GM12878 (cell line): ENCODE measurements at regions of chr5 and their contacts with region 1.

Region 1: DNA sequence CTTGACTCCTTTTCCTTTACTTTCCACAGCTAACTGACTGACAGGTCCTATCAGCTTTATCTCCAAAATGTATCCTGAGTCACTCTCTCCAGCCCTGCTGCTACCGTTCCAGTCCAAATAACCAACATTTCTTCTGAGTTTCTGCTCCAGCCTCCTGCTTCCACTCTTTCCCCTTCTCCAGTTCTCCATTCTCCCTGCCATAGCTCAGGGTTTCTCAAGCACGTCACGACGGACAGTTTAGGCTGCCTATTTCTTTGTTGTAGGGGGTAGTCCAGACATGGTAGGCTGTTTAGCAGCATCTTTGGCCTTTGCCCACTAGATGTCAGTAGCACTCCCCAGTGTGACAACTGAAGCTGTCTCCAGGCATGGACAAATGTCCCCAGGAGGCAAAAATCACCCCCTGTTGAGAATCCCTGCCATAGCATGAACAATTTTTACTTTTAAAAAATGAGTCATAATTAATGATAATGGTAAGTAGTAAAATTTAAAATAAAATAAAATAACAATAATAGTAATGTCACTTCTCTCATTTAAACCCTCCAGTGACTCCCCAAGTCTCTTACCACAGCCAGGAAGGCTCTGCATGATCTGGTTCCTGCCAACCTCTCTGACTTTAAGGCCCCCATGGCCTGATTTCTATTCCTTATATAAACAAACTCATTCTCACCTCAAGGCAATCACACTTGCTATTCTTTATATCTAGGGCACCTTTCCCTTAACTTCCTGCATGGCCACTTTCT is 105.4 kb upstream of the FER start:
- DNase-seq: peak; percentile 68
- ATAC-seq: peak; percentile 100
- H3K4me3 ChIP-seq: no peak overlapping the region
- H3K27ac ChIP-seq: no peak overlapping the region
- H3K4me1 ChIP-seq: no peaks in the 10 kb centered on the region
- H3K27me3 ChIP-seq: no peaks in the 10 kb centered on the region
- CTCF ChIP-seq: peak; percentile 94 to 96 (median 94); a peak in 5 of 6 replicates
- EP300 ChIP-seq: no peak
- POLR2A ChIP-seq: no peak
- RAD21 ChIP-seq: peak; percentile 98

Region 2: DNA sequence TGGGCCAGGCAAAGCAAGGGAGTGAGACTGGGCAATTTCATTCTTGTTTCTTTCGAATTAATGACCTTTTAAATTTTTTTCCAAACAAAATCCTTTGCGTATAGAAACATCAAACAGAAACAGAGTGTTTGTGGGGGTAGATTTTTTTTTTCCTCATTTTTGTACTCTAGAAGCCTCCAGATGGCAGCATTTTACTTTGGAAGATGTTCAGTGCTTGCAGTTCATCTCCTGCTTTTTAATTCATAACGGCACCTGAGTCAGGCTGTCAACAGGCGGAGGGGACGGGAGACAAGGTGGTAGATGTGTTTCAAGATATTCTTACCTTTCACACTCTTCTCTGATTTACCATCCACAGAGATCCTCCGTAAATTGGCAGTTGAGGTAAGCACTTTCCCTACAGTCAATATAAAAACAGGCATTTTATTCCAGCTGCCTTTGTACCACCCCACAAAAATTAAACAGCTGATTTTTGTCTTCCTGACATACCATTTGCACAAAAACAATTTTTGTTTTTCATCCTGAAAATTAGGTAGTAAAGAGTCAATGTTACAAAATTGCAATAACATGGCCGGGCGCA is 160.9 kb before region 1 on chr5:
- CTCF ChIA-PET with region 1: no interaction called
- POLR2A ChIA-PET with region 1: no interaction called
- RAD21 ChIA-PET with region 1: no interaction called
- SMC1A ChIA-PET with region 1: interaction called, 3 read pairs
- in situ Hi-C with region 1: no loop called
- intact Hi-C with region 1: loop called (anchors 5 kb)
- DNase-seq: peak; percentile 30
- ATAC-seq: peak; percentile 62
- H3K4me3 ChIP-seq: no peak overlapping the region
- H3K27ac ChIP-seq: no peak overlapping the region
- H3K4me1 ChIP-seq: no peaks in the 10 kb centered on the region
- H3K27me3 ChIP-seq: no peaks in the 10 kb centered on the region; a peak in 1 of 4 replicates
- CTCF ChIP-seq: peak in 2 of 3 experiments; percentile 24 to 50; a peak in 4 of 6 replicates
- EP300 ChIP-seq: no peak
- POLR2A ChIP-seq: no peak
- RAD21 ChIP-seq: peak; percentile 84

Region 3: DNA sequence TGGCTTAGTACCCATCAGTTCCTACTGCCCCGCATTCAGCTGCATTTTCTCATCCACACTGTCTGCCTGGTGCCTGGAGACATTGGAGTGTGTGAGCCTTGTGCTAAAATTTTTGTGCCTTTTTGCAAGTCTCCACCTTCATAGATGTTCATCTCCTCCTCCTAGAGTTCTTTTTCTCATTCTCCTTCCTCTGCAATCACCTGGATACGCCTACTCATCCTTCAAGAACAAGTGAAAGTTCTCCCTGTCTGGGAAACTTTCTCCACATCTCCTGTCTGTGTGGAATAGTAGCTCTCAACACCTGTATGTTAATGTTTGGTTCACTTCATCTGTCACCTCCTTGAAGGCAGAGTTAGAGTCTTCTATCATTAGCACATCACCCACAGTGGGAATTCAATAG is 134.7 kb before region 1 on chr5:
- CTCF ChIA-PET with region 1: no interaction called
- POLR2A ChIA-PET with region 1: no interaction called
- RAD21 ChIA-PET with region 1: no interaction called
- SMC1A ChIA-PET with region 1: no interaction called
- in situ Hi-C with region 1: no loop called
- intact Hi-C with region 1: no loop called
- DNase-seq: no peak
- ATAC-seq: no peak
- H3K4me3 ChIP-seq: no peak overlapping the region
- H3K27ac ChIP-seq: no peak overlapping the region
- H3K4me1 ChIP-seq: no peaks in the 10 kb centered on the region
- H3K27me3 ChIP-seq: no peaks in the 10 kb centered on the region; a peak in 1 of 4 replicates
- CTCF ChIP-seq: no peak
- EP300 ChIP-seq: no peak
- POLR2A ChIP-seq: no peak
- RAD21 ChIP-seq: no peak

Region 4: GRCh38 chr5:108588323-108588722 is 54.0 kb before region 1 on chr5:
- CTCF ChIA-PET with region 1: no interaction called
- POLR2A ChIA-PET with region 1: no interaction called
- RAD21 ChIA-PET with region 1: no interaction called
- SMC1A ChIA-PET with region 1: no interaction called
- in situ Hi-C with region 1: no loop called
- intact Hi-C with region 1: no loop called
- DNase-seq: no peak
- ATAC-seq: no peak
- H3K4me3 ChIP-seq: no peak overlapping the region
- H3K27ac ChIP-seq: no peak overlapping the region
- H3K4me1 ChIP-seq: no peaks in the 10 kb centered on the region
- H3K27me3 ChIP-seq: no peaks in the 10 kb centered on the region
- CTCF ChIP-seq: no peak
- EP300 ChIP-seq: no peak
- POLR2A ChIP-seq: no peak
- RAD21 ChIP-seq: no peak

Region 5: DNA sequence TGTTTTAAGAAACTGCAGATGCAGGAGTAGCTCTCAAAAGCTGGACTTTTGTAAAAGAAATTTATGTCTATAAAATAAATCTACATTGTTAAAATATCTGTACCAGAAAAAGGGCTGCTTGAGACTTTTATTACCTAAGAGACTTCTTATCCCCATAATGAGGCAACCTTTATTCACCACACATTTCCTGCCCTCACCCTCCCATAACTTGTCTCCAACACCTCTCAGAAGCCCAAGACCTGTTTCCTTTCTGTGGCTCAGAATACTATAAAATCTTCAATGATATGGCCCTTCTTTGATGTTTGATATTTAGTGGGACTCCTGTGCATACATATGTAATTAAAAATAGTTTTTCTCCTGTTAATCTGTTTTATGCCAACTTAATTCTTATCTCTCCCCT is 36.2 kb before region 1 on chr5:
- CTCF ChIA-PET with region 1: no interaction called
- POLR2A ChIA-PET with region 1: no interaction called
- RAD21 ChIA-PET with region 1: no interaction called
- SMC1A ChIA-PET with region 1: no interaction called
- in situ Hi-C with region 1: no loop called
- intact Hi-C with region 1: no loop called
- DNase-seq: no peak
- ATAC-seq: no peak
- H3K4me3 ChIP-seq: no peak overlapping the region
- H3K27ac ChIP-seq: no peak overlapping the region
- H3K4me1 ChIP-seq: no peaks in the 10 kb centered on the region
- H3K27me3 ChIP-seq: no peaks in the 10 kb centered on the region
- CTCF ChIP-seq: no peak
- EP300 ChIP-seq: no peak
- POLR2A ChIP-seq: no peak
- RAD21 ChIP-seq: no peak

Region 6: GRCh38 chr5:108617467-108618435 is 24.6 kb before region 1 on chr5:
- CTCF ChIA-PET with region 1: interaction called, 12 read pairs
- POLR2A ChIA-PET with region 1: no interaction called
- RAD21 ChIA-PET with region 1: no interaction called
- SMC1A ChIA-PET with region 1: no interaction called
- in situ Hi-C with region 1: no loop called
- intact Hi-C with region 1: no loop called
- DNase-seq: no peak
- ATAC-seq: no peak
- H3K4me3 ChIP-seq: no peak overlapping the region
- H3K27ac ChIP-seq: no peak overlapping the region
- H3K4me1 ChIP-seq: no peaks in the 10 kb centered on the region
- H3K27me3 ChIP-seq: no peaks in the 10 kb centered on the region
- CTCF ChIP-seq: no peak
- EP300 ChIP-seq: no peak
- POLR2A ChIP-seq: no peak
- RAD21 ChIP-seq: no peak

Region 7: GRCh38 chr5:109439590-109439989 is 797.3 kb after region 1 on chr5:
- CTCF ChIA-PET with region 1: interaction called, 4 read pairs
- POLR2A ChIA-PET with region 1: no interaction called
- RAD21 ChIA-PET with region 1: interaction called, 8 read pairs
- SMC1A ChIA-PET with region 1: no interaction called
- in situ Hi-C with region 1: no loop called
- intact Hi-C with region 1: loop called (anchors 2 kb)
- DNase-seq: no peak
- ATAC-seq: peak; percentile 68
- H3K4me3 ChIP-seq: no peak overlapping the region
- H3K27ac ChIP-seq: no peak overlapping the region
- H3K4me1 ChIP-seq: no peaks in the 10 kb centered on the region
- H3K27me3 ChIP-seq: no peaks in the 10 kb centered on the region
- CTCF ChIP-seq: no peak
- EP300 ChIP-seq: no peak
- POLR2A ChIP-seq: no peak
- RAD21 ChIP-seq: no peak

Region 8: GRCh38 chr5:109479260-109479860 is 837.0 kb after region 1 on chr5:
- CTCF ChIA-PET with region 1: interaction called, 6 read pairs
- POLR2A ChIA-PET with region 1: no interaction called
- RAD21 ChIA-PET with region 1: interaction called, 5 read pairs
- SMC1A ChIA-PET with region 1: interaction called, 5 read pairs
- in situ Hi-C with region 1: loop called (anchors 25 kb)
- intact Hi-C with region 1: loop called (anchors 1 kb)
- DNase-seq: no peak
- ATAC-seq: peak; percentile 60; the same call in 2 of the 3 replicates
- H3K4me3 ChIP-seq: no peak overlapping the region
- H3K27ac ChIP-seq: no peak overlapping the region
- H3K4me1 ChIP-seq: no peaks in the 10 kb centered on the region
- H3K27me3 ChIP-seq: 0 out of 4 replicates have a peak, but pooled peaks cover 0 to 4% of the 10 kb centered on the region in 2 experiments
- CTCF ChIP-seq: peak; percentile 29 to 54 (median 34); a peak in 3 of 6 replicates
- EP300 ChIP-seq: no peak
- POLR2A ChIP-seq: no peak
- RAD21 ChIP-seq: peak; percentile 52